ENCODE measurements at regions of chr6 and their contacts with region 1.

Region 1: GRCh38 chr6:16420715-16421461 is 182.5 kb downstream of the GMPR start:
- DNase-seq: peak; percentile 64
- CTCF ChIP-seq: no peak

Region 2: DNA sequence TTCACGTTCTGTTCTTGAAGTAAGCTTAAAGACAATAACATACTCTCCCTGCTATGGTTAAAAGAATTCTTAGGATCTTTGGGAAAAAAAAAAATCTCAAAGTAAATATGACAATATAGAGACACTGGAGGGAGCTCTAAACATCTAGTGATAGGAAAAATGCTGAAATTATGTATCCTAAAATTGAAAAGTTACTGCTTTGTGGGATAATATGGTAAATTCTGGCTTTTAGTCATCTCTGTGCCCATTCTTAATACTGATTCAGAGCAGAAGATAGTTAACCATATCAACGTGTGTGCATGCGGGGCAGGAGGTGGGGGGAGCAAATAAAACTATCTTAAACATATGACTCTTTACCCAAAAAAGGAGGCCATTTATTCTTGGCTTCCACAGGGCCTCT is 17.1 kb before region 1 on chr6:
- CTCF ChIA-PET with region 1: interaction called, 16 read pairs
- POLR2A ChIA-PET with region 1: no interaction called
- DNase-seq: no peak
- CTCF ChIP-seq: no peak

Region 3: GRCh38 chr6:16608444-16608843 is 187.6 kb after region 1 on chr6:
- CTCF ChIA-PET with region 1: no interaction called
- POLR2A ChIA-PET with region 1: no interaction called
- DNase-seq: no peak
- CTCF ChIP-seq: no peak

Measured in GM10248 (cell line).